Mammary epithelial cell (primary cell): ENCODE measurements at regions of chr2 and their contacts with region 1.

Region 1: DNA sequence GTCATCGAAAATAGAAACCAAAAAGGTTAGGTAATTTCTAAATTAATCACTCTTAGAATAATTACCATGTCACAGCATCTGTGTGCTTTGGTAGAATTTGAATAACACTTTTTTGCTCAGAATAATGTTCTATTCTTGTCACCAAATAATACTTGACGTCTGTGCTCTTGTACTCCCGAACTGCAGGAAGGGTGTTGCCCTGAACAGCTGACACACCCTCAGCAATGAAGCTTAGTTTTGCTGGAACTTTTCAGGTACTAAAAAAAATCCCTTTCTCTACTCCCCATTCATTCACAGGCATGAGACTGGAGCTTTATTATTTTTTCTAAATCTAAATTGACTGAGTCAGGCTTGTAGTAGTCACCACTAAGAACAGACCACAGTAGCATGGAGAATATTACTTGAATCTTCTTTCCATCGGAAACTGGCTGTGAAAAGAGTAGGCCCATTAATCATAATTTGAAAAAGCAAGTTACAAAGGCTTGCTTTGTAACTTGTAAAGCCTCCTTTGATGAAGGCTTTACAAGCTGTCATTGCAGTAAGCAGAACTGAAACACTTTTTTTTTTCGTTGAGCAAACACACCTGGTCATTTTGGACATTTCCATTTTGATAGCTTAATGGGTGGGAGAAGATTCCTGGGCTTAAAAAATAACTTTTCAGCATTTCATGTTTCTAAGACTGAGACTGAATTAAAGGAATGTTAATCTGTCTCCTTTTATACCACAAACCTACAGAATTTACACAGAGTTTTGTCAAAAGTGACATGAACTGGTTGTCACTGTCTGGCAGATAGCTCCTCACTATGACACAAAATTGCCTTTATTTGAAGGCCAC is 70.3 kb upstream of the PELI1 start:
- DNase-seq: peak; percentile 95
- H3K4me3 ChIP-seq: no peak overlapping the region
- H3K27ac ChIP-seq: peak overlapping the region; percentile 67
- H3K4me1 ChIP-seq: peaks cover 45% of the 10 kb centered on the region
- H3K27me3 ChIP-seq: no peaks in the 10 kb centered on the region
- CTCF ChIP-seq: no peak

Region 2: DNA sequence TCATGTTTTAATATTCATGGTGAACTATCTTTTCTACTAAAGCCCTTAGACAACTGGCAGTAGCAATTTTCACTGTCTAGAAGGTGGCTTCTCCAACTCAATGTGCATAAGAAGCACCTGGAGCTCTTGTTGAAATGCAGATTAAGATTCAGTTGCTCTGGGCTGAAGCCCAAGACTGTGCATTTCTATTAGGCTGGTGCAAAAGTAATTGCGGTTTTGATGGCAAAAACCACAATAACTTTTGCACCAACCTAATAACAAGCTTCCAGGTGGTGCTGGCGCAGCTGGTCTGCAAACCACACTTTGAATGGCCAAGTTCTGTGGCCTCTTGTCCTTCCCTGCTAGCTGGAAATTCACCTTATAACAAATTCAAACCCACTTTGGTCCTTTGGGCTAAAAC is 168.6 kb before region 1 on chr2:
- CTCF ChIA-PET with region 1: no interaction called
- dilution Hi-C with region 1: no loop called
- in situ Hi-C with region 1: no loop called
- intact Hi-C with region 1: loop called (anchors 5 kb)
- DNase-seq: no peak
- H3K4me3 ChIP-seq: no peak overlapping the region
- H3K27ac ChIP-seq: no peak overlapping the region
- H3K4me1 ChIP-seq: peaks cover 4% of the 10 kb centered on the region
- H3K27me3 ChIP-seq: no peaks in the 10 kb centered on the region
- CTCF ChIP-seq: no peak

Region 3: GRCh38 chr2:64144057-64145013 is 70.2 kb before region 1 on chr2 and contains the start of gene PELI1:
- CTCF ChIA-PET with region 1: no interaction called
- dilution Hi-C with region 1: no loop called
- in situ Hi-C with region 1: no loop called
- intact Hi-C with region 1: loop called (anchors 1 kb)
- DNase-seq: peak; percentile 99
- H3K4me3 ChIP-seq: peak within 1 kb of the TSS; percentile 92 to 96 (median 94)
- H3K27ac ChIP-seq: peak within 1 kb of the TSS; percentile 94
- H3K4me1 ChIP-seq: peaks cover 12% of the 10 kb centered on the region
- H3K27me3 ChIP-seq: no peaks in the 10 kb centered on the region
- CTCF ChIP-seq: peak in 1 of 2 donors; percentile 41
- total RNA-seq, gene PELI1: 18.9 to 26.7 TPM

Region 4: GRCh38 chr2:64260817-64261216 is 46.3 kb after region 1 on chr2:
- CTCF ChIA-PET with region 1: no interaction called
- dilution Hi-C with region 1: no loop called
- in situ Hi-C with region 1: no loop called
- intact Hi-C with region 1: loop called (anchors 5 kb)
- DNase-seq: no peak
- H3K4me3 ChIP-seq: no peak overlapping the region
- H3K27ac ChIP-seq: no peak overlapping the region
- H3K4me1 ChIP-seq: peaks cover 35% of the 10 kb centered on the region
- H3K27me3 ChIP-seq: no peaks in the 10 kb centered on the region
- CTCF ChIP-seq: no peak

Region 5: DNA sequence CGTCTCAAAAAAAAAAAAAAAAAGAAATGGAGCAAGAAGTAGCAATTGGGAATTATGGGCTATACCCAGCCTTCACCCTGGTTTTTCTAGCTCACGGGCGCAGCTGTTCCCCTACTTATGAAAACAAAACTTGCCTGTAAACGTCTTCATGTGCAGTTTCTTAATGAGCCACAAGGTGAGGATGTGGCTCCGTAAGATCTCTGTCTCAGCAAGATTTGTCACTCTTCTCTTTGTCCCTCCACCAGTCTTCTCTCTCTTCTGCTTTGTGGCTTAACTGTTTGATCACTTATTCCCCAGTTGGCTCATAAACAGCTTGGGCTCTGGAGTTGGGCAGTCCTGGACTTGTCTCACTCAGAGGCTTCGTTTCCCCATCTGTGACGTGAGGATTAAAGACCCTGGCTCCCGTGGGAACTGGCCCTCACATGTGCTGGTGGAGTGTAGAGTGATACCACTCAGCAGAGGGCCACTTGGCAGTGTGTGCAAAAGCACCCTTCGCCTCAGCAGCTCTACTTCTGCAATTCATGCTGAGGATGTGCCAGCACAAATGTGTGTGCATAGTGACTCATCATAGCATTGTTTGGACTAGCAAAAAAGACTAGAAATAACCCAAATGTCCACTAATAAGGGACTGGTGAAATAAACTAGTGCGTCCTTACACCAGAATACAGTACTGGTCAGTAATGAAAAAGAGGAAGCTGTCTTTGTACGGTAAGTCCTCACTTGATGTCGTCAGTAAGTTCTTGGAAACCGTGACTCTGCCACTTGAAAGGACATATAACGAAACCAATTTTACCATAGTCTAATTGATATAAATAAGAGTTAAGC is 850.4 kb after region 1 on chr2:
- CTCF ChIA-PET with region 1: interaction called, 11 read pairs
- dilution Hi-C with region 1: no loop called
- in situ Hi-C with region 1: no loop called
- intact Hi-C with region 1: no loop called
- DNase-seq: peak; percentile 77
- H3K4me3 ChIP-seq: no peak overlapping the region
- H3K27ac ChIP-seq: peak overlapping the region; percentile 42
- H3K4me1 ChIP-seq: peaks cover 50% of the 10 kb centered on the region
- H3K27me3 ChIP-seq: no peaks in the 10 kb centered on the region
- CTCF ChIP-seq: peak; percentile 75 to 77